ENCODE measurements at regions of chr15 and their contacts with region 1.

Region 1: GRCh38 chr15:45634442-45635190 is at the start of gene SQOR:
- DNase-seq: peak; percentile 84
- H3K4me3 Mint-ChIP-seq: peak within 1 kb of the TSS; percentile 99
- H3K27ac Mint-ChIP-seq: peak within 1 kb of the TSS; percentile 96
- H3K4me1 Mint-ChIP-seq: peaks cover 41% of the 10 kb centered on the region
- H3K27me3 Mint-ChIP-seq: no peaks in the 10 kb centered on the region
- total RNA-seq, gene SQOR: 181 to 194 TPM

Region 2: GRCh38 chr15:45522328-45523160 is 112.1 kb before region 1 on chr15 and contains the start of gene SLC30A4:
- CTCF ChIA-PET with region 1: no interaction called
- POLR2A ChIA-PET with region 1: no interaction called
- intact Hi-C with region 1: loop called (anchors 5 kb)
- DNase-seq: peak; percentile 66
- H3K4me3 Mint-ChIP-seq: peak within 1 kb of the TSS; percentile 82
- H3K27ac Mint-ChIP-seq: peak within 1 kb of the TSS; percentile 14
- H3K4me1 Mint-ChIP-seq: peaks cover 21% of the 10 kb centered on the region
- H3K27me3 Mint-ChIP-seq: no peaks in the 10 kb centered on the region
- total RNA-seq, gene SLC30A4: 1.5 to 2.0 TPM

Region 3: DNA sequence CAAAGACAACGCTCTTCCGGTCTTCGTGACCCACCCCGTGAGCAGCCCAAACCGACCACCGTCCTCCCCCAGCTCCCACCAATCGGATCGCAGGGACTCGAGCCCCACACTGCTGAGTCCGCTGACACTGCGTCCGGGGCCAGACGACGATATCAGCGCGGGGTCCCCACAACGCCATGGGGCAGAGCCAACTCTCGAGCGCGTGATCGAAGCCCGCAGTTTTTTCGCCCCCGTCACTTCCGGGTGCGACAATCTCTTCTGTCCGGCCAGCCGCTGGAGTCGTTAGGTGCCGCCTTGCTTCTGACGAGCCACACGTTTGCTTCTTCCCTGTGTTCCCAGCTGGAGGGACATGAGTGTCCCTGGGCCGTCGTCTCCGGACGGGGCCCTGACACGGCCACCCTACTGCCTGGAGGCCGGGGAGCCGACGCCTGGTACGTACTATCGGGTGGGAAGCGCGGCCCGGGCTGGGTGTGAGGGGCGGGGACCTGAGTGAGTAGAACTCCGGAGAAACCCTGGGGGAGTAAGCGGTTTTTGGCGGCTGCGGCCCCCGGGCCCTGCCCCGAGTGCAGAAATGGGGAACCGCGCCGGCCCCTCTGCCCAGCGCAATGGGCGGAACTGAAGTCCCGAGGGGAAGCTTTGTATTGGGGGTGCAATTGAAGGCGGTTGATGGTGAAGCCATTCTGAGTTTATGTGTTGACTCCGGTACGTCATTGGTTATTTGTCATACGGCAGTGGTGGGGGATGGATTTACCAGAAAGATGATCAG is 47.3 kb before region 1 on chr15 and contains the start of gene BLOC1S6:
- CTCF ChIA-PET with region 1: interaction called, 7 read pairs
- POLR2A ChIA-PET with region 1: interaction called, 8 read pairs
- intact Hi-C with region 1: loop called (anchors 1 kb)
- DNase-seq: peak; percentile 92
- H3K4me3 Mint-ChIP-seq: peak within 1 kb of the TSS; percentile 99
- H3K27ac Mint-ChIP-seq: peak within 1 kb of the TSS; percentile 100
- H3K4me1 Mint-ChIP-seq: peaks cover 38% of the 10 kb centered on the region
- H3K27me3 Mint-ChIP-seq: no peaks in the 10 kb centered on the region
- total RNA-seq, gene BLOC1S6: 48.5 to 49.4 TPM

Region 4: GRCh38 chr15:45611305-45611704 is 23.3 kb before region 1 on chr15:
- CTCF ChIA-PET with region 1: interaction called, 14 read pairs
- POLR2A ChIA-PET with region 1: no interaction called
- intact Hi-C with region 1: no loop called
- DNase-seq: no peak
- H3K4me3 Mint-ChIP-seq: no peak overlapping the region
- H3K27ac Mint-ChIP-seq: no peak overlapping the region
- H3K4me1 Mint-ChIP-seq: peaks cover 11% of the 10 kb centered on the region
- H3K27me3 Mint-ChIP-seq: no peaks in the 10 kb centered on the region

Region 5: DNA sequence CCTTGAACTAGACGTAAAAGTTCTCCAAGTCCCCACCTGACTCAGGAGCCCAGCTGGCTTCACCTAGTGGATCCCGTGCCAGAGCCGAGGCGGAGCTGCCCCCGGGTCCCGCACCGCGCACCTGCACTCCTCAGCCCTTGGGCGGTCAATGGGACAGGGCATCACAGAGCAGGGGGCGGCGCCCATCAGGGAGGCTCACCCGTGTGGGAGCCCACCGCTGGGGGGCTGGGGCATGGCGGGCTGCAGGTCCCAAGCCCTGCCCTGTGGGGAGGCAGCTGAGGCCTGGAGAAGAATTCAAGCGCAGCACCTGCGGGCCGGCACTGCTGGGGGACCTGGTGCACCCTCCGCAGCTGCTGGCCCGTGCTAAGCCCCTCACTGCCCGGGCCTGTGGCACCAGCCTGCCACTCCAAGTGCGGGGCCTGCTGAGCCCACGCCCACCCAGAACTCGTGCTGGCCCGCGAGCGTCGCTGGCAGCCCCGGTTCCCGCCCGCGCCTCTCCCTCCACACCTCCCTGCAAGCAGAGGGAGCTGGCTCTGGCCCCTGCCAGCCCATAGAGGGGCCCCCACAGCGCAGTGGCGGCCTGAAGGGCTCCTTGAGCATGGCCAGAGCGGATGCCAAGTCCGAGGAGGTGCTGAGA is 16.4 kb after region 1 on chr15:
- CTCF ChIA-PET with region 1: interaction called, 11 read pairs
- POLR2A ChIA-PET with region 1: interaction called, 55 read pairs
- intact Hi-C with region 1: loop called (anchors 2 kb)
- DNase-seq: no peak
- H3K4me3 Mint-ChIP-seq: no peak overlapping the region
- H3K27ac Mint-ChIP-seq: no peak overlapping the region
- H3K4me1 Mint-ChIP-seq: peaks cover 67% of the 10 kb centered on the region
- H3K27me3 Mint-ChIP-seq: no peaks in the 10 kb centered on the region

Region 6: DNA sequence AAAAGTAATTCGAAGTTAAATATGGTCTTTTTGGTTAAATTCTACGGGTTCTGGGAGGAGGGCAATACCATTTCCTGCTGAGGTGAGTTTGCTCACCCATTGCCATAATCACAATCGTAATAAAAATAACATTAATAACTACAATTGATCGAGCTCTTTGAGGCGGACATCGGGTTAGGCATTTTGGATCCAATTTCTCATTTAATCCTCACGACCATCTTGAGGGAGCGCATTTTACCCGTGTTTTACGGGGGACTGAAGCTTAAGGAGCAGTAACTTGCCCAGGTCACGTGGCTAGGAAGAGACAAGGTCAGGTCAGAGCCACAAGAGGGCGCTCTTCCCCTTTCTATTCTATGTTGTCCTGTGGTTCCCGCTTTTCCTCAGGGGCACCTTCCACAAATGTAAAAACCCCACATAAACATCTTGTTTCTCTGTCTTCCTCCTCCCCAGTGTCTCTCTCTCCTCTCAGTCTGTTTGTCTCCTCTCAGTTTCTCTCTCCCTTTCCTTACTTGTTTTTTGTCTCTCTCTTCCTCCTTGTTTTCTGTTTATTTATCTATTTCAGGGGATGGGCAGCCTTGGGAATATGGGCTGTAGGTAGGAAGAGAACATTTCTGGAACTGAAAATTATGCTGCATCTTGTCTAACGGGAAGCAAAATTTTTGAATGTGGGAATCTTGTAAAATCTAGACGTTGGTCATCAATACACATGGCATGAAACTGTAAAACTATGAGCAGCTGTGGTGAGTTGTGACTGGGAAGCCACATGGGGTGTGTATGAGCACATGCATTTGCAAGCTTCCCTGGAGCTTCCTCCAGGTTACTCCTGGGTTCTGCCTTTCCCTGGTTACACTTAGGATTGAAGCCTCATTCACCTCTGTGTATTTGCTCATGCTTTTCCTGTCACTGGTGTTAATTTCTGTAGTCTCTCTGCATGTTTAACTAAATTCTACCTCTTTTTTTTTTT is 71.2 kb after region 1 on chr15:
- CTCF ChIA-PET with region 1: interaction called, 11 read pairs
- POLR2A ChIA-PET with region 1: no interaction called
- intact Hi-C with region 1: loop called (anchors 2 kb)
- DNase-seq: peak; percentile 79
- H3K4me3 Mint-ChIP-seq: peak overlapping the region; percentile 86
- H3K27ac Mint-ChIP-seq: no peak overlapping the region
- H3K4me1 Mint-ChIP-seq: peaks cover 11% of the 10 kb centered on the region
- H3K27me3 Mint-ChIP-seq: peaks cover 4% of the 10 kb centered on the region